ENCODE measurements at regions of chr20 and their contacts with region 1.

Region 1: GRCh38 chr20:35994994-35995453 is 26.6 kb downstream of the CNBD2 start:
- DNase-seq: peak; percentile 74 to 86 (median 81)
- H3K4me3 ChIP-seq: no peak overlapping the region
- H3K27ac ChIP-seq: no peak overlapping the region
- H3K4me1 ChIP-seq: no peaks in the 10 kb centered on the region
- H3K27me3 ChIP-seq: no peaks in the 10 kb centered on the region
- CTCF ChIP-seq: peak; percentile 58 to 74 (median 64)
- EP300 ChIP-seq: no peak
- POLR2A ChIP-seq: no peak

Region 2: DNA sequence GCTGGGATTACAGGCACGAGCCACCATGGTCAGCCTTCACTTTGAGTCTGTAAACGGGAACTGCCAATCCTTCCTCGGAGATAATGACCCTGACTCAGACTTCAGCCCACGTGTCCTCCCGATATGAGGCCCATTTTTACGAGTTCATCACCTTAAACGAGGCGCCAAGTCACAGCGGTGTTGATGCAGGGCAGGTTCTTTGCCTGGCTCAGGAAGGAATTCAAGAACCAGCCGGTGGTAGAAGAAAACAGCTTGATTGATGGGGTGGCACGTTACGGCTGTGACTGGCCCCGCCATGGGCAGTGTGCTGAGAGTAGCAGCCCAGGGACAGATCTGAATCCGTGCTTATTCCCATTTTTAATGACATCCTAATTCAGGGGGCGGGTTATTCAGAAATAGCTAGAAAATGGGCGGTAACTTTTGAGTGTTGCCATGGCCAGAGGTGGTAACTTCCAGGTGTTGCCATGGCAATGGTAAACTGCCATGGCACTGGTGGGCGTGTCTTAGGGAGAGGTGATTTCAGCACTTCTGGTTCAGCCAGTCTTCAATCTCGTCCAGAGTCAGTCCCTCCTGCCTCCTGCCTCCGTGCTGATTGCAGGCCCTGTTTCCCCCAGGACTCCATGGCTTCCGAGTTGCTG is 1445.6 kb before region 1 on chr20:
- intact Hi-C with region 1: no loop called
- DNase-seq: no peak
- H3K4me3 ChIP-seq: no peak overlapping the region
- H3K27ac ChIP-seq: no peak overlapping the region
- H3K4me1 ChIP-seq: no peaks in the 10 kb centered on the region
- H3K27me3 ChIP-seq: no peaks in the 10 kb centered on the region
- CTCF ChIP-seq: no peak
- EP300 ChIP-seq: no peak
- POLR2A ChIP-seq: no peak

Region 3: GRCh38 chr20:36132802-36133211 is 137.8 kb after region 1 on chr20:
- intact Hi-C with region 1: loop called (anchors 2 to 5 kb)
- DNase-seq: no peak
- H3K4me3 ChIP-seq: no peak overlapping the region
- H3K27ac ChIP-seq: no peak overlapping the region
- H3K4me1 ChIP-seq: no peaks in the 10 kb centered on the region
- H3K27me3 ChIP-seq: no peaks in the 10 kb centered on the region
- CTCF ChIP-seq: no peak
- EP300 ChIP-seq: no peak
- POLR2A ChIP-seq: no peak

Region 4: GRCh38 chr20:36144336-36144735 is 149.3 kb after region 1 on chr20:
- intact Hi-C with region 1: loop called in 3 of 4 experiments (anchors 2 to 5 kb)
- DNase-seq: no peak
- H3K4me3 ChIP-seq: no peak overlapping the region
- H3K27ac ChIP-seq: no peak overlapping the region
- H3K4me1 ChIP-seq: no peaks in the 10 kb centered on the region
- H3K27me3 ChIP-seq: no peaks in the 10 kb centered on the region
- CTCF ChIP-seq: no peak
- EP300 ChIP-seq: no peak
- POLR2A ChIP-seq: no peak

Region 5: DNA sequence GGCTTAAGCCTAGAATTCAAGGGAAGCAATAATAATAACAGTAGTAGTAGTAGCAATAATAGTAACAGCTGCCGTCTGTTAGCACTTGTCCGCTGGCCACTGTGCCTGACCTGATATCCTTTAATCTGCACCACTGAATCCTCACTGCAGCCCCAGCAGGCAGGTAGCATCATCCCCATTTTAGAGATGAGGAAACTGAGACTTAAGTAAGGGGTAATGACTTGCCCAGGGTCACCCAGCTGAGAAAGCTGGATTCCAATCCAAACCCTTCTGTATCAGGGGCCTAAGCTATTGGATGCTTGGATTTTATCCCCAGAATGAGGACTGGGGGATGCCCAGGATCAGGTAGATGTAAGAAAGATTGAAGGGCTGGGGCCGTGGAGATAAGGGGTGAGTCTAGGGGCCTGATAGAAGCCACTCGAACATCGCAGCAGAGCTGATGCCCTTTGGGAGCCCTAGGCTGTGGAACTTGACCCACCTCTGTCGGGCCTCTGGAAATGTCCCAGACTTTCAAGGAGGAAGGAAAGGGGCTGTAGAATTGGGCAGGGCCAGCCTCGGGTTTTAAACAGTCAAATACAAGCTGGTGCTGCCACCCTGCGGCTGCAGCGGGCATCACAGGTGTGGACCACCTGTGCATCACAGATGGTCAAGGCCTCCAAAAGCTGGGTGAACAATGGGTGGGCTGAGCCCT is 444.2 kb after region 1 on chr20:
- intact Hi-C with region 1: loop called in 2 of 4 experiments (anchors 5 to 10 kb)
- DNase-seq: peak; percentile 48 to 79 (median 62)
- H3K4me3 ChIP-seq: no peak overlapping the region
- H3K27ac ChIP-seq: no peak overlapping the region
- H3K4me1 ChIP-seq: no peaks in the 10 kb centered on the region
- H3K27me3 ChIP-seq: no peaks in the 10 kb centered on the region
- CTCF ChIP-seq: peak; percentile 40 to 65 (median 43)
- EP300 ChIP-seq: no peak
- POLR2A ChIP-seq: no peak

Measured in ovary (tissue), 10 donors.